Keratinocyte (primary cell): ENCODE measurements at regions of chr11 and their contacts with region 1.

Region 1: DNA sequence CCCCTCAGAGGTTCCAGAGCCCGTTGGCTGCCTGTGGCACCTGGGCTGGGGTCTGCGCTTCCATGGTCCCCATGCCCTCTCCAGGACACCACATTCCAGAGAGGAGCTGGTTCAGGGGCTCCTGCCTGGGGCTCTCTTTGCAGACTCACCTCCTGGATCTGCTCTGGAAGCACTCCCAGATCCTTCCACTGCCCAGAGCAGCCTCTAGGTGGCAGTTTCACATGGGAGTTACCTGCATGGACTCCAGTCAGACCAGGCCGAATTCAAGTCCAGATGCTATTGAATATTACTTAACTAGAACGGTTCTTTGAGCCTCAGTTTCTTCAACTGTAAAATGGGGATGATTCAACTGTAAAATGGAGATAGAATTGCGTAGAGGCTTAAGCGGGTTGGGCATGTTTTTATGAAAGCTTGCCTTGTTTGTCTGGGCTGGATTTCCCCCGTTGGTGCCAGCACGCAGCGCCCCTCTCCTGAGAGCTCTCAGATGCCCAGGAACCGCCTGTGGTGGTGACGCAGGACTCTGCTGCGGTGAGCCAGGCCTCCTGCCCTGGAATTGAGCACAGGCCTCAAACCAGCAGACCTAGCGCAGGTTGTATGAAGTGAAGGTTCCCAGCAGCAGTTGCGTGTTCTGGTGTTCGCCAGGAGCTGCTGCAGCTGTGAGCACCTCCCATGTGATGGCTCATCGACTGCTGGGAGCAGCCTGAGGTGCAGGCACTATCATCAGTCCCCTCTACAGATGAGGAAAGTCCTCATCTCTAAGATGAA is 44.2 kb downstream of the LMO1 start:
- DNase-seq: no peak
- H3K4me3 ChIP-seq: no peak overlapping the region
- H3K27ac ChIP-seq: no peak overlapping the region
- H3K4me1 ChIP-seq: peaks cover 3% of the 10 kb centered on the region
- H3K27me3 ChIP-seq: peaks cover 11% of the 10 kb centered on the region
- CTCF ChIP-seq: peak; percentile 74 to 89 (median 81)

Region 2: DNA sequence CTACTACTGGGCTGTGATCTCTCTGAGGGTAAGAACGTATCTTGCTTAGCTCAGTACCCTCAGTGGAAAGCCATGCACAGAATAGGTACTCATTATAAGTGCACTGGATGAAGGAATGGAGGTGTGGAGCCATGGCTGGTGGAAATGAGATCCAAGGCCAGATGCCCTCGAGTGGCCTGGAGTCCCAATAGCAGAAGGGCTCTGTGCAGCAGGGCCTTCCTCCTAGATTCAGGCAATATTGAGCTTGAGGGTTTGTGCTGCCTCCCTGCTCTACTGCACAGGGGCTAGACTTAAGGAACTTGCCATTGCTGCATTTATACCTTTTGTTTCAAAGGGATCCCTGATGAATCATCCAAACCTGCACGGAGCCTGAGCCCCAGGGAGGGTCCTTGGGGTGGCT is 172.1 kb before region 1 on chr11:
- dilution Hi-C with region 1: no loop called
- DNase-seq: no peak
- H3K4me3 ChIP-seq: no peak overlapping the region
- H3K27ac ChIP-seq: no peak overlapping the region
- H3K4me1 ChIP-seq: no peaks in the 10 kb centered on the region
- H3K27me3 ChIP-seq: peaks cover 3% of the 10 kb centered on the region
- CTCF ChIP-seq: no peak

Region 3: DNA sequence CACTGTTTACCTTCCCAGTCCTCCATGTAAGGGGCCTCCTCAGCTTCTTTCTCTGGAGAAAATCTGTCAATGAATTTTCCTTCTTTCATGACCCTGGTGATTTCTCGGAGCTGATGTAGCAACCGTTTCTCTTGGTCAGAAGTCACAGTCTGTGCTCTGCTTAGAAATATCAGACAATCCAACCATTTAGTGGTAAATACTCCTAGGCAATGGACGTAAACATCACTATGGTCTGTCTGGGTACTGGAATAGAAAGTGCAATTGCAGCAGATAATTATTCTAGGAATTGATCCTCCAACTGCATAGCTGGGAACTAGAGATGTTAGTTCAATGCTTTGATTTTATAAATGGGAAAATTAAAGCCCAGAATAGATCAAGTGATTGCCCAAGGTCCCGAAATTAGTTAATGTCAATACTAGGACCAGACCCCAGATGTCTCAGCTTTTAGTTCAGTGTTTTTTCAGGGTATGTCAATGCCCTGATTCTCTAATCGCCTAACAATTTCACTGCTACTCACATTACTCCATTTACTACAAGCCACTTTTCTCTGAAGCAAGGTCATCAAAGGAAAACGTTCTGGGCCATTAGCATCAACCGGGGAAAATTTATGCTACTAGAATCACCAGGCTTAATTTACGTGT is 92.7 kb before region 1 on chr11:
- dilution Hi-C with region 1: no loop called
- DNase-seq: no peak
- H3K4me3 ChIP-seq: no peak overlapping the region
- H3K27ac ChIP-seq: no peak overlapping the region
- H3K4me1 ChIP-seq: no peaks in the 10 kb centered on the region
- H3K27me3 ChIP-seq: no peaks in the 10 kb centered on the region
- CTCF ChIP-seq: no peak

Region 4: GRCh38 chr11:8566613-8567210 is 347.3 kb after region 1 on chr11:
- dilution Hi-C with region 1: loop called (anchors 25 kb)
- DNase-seq: peak; percentile 26
- H3K4me3 ChIP-seq: no peak overlapping the region
- H3K27ac ChIP-seq: no peak overlapping the region
- H3K4me1 ChIP-seq: peaks cover 13% of the 10 kb centered on the region
- H3K27me3 ChIP-seq: no peaks in the 10 kb centered on the region
- CTCF ChIP-seq: peak in 2 of 3 experiments; percentile 34 to 45